MCF 10A (cell line): ENCODE measurements at regions of chr6 and their contacts with region 1.

Region 1: GRCh38 chr6:132279592-132280139 is 121.6 kb downstream of the MOXD1 start:
- DNase-seq: peak; percentile 77
- H3K4me3 Mint-ChIP-seq: peak overlapping the region; percentile 71
- H3K27ac Mint-ChIP-seq: no peak overlapping the region
- H3K4me1 Mint-ChIP-seq: no peaks in the 10 kb centered on the region
- H3K27me3 Mint-ChIP-seq: no peaks in the 10 kb centered on the region
- CTCF ChIP-seq: peak; percentile 76

Region 2: DNA sequence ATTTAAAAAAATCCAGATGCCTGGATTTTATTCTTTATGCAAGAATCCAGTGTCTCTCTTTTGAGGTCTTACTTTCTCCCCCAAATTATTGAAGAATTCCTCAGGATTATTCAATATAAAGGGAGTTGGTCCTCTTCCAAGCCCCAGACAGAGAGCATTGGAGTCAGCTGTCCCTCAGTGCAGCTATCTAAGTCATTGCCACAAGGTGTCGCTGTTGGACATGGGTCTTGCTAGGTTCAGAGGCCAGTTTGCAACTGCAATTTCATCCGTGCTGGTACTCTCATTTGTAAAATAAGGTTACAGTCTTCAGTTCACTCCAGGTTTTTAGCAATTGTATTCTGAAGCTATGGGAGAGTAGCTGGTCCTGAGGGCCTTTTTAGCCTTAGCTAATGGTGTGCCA is 356.3 kb before region 1 on chr6:
- CTCF ChIA-PET with region 1: interaction called, 47 read pairs
- POLR2A ChIA-PET with region 1: interaction called, 3 read pairs
- intact Hi-C with region 1: loop called (anchors 1 kb)
- DNase-seq: peak; percentile 83
- H3K4me3 Mint-ChIP-seq: no peak overlapping the region
- H3K27ac Mint-ChIP-seq: no peak overlapping the region
- H3K4me1 Mint-ChIP-seq: peaks cover 6% of the 10 kb centered on the region
- H3K27me3 Mint-ChIP-seq: no peaks in the 10 kb centered on the region
- CTCF ChIP-seq: peak; percentile 54

Region 3: GRCh38 chr6:132259070-132259469 is 20.6 kb before region 1 on chr6:
- CTCF ChIA-PET with region 1: interaction called, 63 read pairs
- POLR2A ChIA-PET with region 1: interaction called, 3 read pairs
- intact Hi-C with region 1: no loop called
- DNase-seq: peak; percentile 30
- H3K4me3 Mint-ChIP-seq: no peak overlapping the region
- H3K27ac Mint-ChIP-seq: no peak overlapping the region
- H3K4me1 Mint-ChIP-seq: peaks cover 10% of the 10 kb centered on the region
- H3K27me3 Mint-ChIP-seq: no peaks in the 10 kb centered on the region
- CTCF ChIP-seq: peak; percentile 28

Region 4: GRCh38 chr6:132445201-132445951 is 165.7 kb after region 1 on chr6:
- CTCF ChIA-PET with region 1: interaction called, 14 read pairs
- POLR2A ChIA-PET with region 1: no interaction called
- intact Hi-C with region 1: no loop called
- DNase-seq: peak; percentile 52
- H3K4me3 Mint-ChIP-seq: no peak overlapping the region
- H3K27ac Mint-ChIP-seq: no peak overlapping the region
- H3K4me1 Mint-ChIP-seq: peaks cover 6% of the 10 kb centered on the region
- H3K27me3 Mint-ChIP-seq: no peaks in the 10 kb centered on the region
- CTCF ChIP-seq: no peak

Region 5: GRCh38 chr6:132475925-132476324 is 196.3 kb after region 1 on chr6:
- CTCF ChIA-PET with region 1: interaction called, 30 read pairs
- POLR2A ChIA-PET with region 1: no interaction called
- intact Hi-C with region 1: no loop called
- DNase-seq: no peak
- H3K4me3 Mint-ChIP-seq: no peak overlapping the region
- H3K27ac Mint-ChIP-seq: no peak overlapping the region
- H3K4me1 Mint-ChIP-seq: no peaks in the 10 kb centered on the region
- H3K27me3 Mint-ChIP-seq: no peaks in the 10 kb centered on the region
- CTCF ChIP-seq: no peak

Region 6: DNA sequence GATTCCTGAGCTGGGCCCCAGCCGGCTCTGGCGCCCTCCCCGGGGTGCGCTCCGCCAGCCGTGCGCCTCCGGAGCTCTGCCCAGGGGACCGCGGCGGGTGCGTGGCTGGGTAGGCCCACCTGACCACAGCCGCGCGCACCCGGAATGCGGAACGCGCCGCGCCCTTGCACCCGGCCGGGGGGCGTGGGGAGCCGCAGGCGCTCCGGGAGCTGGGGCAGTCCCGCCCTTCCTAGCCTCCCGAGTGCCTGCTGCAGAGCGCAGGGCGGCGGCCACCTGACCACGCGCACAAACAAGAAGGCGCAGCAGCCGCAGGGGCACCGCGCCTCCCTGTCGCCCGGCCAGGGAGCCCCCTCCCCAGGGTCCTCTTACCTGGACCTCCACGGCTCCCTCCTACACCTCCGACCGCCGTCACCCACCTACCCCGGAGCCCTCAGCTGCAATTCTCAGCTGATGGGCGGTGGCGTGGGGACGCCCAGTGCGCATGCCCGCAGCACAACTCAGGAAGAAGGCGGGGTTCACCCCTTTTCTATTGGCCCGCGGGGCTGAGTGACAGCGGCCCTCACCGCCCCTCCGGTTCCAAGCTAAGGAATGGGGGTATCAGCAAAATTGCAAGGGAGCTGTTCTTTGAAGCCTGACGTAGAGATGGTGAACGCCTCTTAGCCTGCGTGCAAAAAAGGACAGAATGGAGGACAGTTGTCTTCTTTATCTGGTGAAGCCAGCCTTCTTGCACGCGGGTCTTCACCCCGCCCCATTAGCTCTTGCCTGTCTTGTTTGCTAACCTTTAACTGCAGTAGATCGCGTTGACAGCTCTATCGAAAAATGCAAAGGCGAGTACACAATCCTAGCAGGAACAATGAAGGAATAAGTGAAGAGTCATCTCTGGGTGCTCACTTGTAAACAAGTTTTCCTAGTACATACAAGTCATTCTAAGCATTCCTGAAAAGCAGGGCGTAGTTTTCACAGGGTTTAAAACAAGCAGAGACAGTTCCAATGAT is 233.3 kb after region 1 on chr6 and contains the start of gene STX7:
- CTCF ChIA-PET with region 1: interaction called, 13 read pairs
- POLR2A ChIA-PET with region 1: no interaction called
- intact Hi-C with region 1: no loop called
- DNase-seq: peak; percentile 90
- H3K4me3 Mint-ChIP-seq: peak within 1 kb of the TSS; percentile 92
- H3K27ac Mint-ChIP-seq: peak within 1 kb of the TSS; percentile 82
- H3K4me1 Mint-ChIP-seq: peaks cover 27% of the 10 kb centered on the region
- H3K27me3 Mint-ChIP-seq: no peaks in the 10 kb centered on the region
- CTCF ChIP-seq: no peak
- total RNA-seq, gene STX7: 31.3 and 33.0 TPM in 2 replicates